Transverse colon (tissue), 4 donors: ENCODE measurements at regions of chr16 and their contacts with region 1.

Region 1: DNA sequence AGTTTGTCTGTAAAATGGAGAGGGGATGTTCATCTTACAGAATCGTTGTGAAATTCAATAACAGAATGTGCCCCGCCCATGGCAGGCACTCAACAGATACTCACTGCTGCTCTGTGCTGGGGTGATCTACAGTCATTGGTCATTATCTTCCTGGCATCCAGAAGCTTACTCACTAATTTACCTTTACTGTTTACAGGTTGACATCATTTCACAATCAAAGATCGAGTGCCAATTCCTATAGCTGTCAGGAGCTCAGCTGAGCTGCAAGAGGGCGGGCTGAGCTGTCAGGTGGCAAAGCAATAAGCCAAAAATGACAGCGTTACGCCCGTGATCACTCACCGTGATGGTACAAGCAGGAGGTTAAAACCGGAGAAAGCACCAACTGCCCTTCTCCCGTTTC is 51.2 kb downstream of the LITAF start:
- DNase-seq: peak; percentile 34
- H3K4me3 ChIP-seq: no peak overlapping the region
- H3K27ac ChIP-seq: peak overlapping the region in 3 of 4 donors; percentile 10 to 53 (median 36)
- H3K4me1 ChIP-seq: peaks cover 0 to 26% (median 11%) of the 10 kb centered on the region in 4 donors
- H3K27me3 ChIP-seq: no peaks in the 10 kb centered on the region
- CTCF ChIP-seq: no peak
- EP300 ChIP-seq: no peak
- POLR2A ChIP-seq: no peak

Region 2: DNA sequence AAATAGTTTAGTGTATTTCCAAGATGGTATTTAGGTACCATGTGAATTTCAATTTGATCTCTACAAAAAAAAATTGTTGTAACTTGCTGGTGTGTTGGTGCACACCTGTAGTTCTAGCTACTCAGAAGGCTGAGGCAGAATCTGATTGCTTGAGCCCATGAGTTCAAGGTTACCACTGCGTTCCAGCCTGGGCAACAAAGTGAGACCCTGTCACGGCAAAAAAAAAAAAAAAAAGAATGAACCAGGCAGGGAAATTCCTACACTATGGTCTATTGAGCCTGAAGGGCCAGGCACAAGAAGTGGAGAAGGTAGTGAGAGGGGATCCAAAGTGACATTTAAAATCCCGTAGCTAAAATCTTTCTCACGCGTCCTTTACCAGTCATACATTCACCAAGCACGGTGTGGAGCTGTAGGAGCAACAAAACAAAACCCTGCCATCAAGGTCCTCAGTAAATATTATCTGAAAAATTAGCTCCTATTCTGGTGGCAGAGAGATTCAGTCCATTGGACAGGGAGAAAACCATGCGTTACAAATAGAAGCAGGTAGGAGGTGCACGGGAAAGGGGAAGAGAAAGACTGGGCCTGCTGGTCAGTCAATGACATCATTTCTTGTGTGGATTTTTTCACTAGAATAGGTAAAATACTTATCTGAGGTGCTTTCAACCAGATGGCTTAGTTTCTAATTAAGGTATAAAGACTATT is 179.9 kb after region 1 on chr16:
- in situ Hi-C with region 1: loop called in 2 of 4 experiments (anchors 10 kb)
- intact Hi-C with region 1: loop called (anchors 10 kb)
- DNase-seq: no peak
- H3K4me3 ChIP-seq: no peak overlapping the region
- H3K27ac ChIP-seq: no peak overlapping the region
- H3K4me1 ChIP-seq: peaks cover 0 to 28% (median 2%) of the 10 kb centered on the region in 4 donors
- H3K27me3 ChIP-seq: no peaks in the 10 kb centered on the region
- CTCF ChIP-seq: no peak
- EP300 ChIP-seq: no peak
- POLR2A ChIP-seq: no peak